Ascending aorta (tissue), 2 donors: ENCODE measurements at regions of chr6 and their contacts with region 1.

Region 1: DNA sequence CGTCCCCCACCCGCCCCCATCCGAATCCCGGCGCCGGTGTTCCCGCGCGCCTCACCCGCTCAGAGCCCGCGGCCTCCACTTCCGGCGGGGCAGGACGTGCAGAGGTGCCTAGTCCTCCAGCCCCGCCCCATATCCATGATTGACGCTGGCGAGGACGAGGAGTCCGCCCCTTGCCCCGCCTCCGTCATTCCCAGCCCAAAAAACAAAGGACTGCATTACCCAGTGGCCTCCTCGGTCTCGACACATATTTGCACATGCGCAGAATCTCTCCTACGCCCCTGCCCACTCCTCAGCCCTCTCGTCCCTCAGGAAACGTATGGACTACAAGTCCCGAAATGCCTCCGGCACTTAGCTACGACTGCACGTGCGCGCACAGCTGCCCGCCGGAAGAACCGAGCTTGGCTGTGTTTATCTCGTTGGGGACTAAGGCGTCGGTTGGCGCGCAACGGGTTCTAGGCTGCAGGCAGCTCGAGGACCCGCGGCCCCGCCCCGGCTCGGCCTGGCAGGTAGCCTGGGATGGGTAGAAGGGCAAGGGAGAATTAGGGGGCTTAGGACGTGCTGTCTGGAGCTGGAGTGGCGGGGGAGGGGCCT is at the starts of genes KLHDC3 and MEA1:
- DNase-seq: peak; percentile 99 to 100
- H3K4me3 ChIP-seq: peak within 1 kb of the TSS; percentile 76 to 81
- H3K27ac ChIP-seq: peak within 1 kb of the TSS; percentile 81 to 82
- H3K4me1 ChIP-seq: peaks cover 13 to 33% of the 10 kb centered on the region in 2 donors
- H3K27me3 ChIP-seq: no peaks in the 10 kb centered on the region
- CTCF ChIP-seq: no peak
- total RNA-seq, gene KLHDC3: 64.0 TPM
- total RNA-seq, gene MEA1: 61.1 TPM

Region 2: GRCh38 chr6:42901536-42901957 is 112.4 kb before region 1 on chr6:
- intact Hi-C with region 1: loop called (anchors 5 kb)
- DNase-seq: peak in 1 of 2 donors; percentile 87
- H3K4me3 ChIP-seq: no peak overlapping the region
- H3K27ac ChIP-seq: no peak overlapping the region
- H3K4me1 ChIP-seq: peaks cover 0 to 18% of the 10 kb centered on the region in 2 donors
- H3K27me3 ChIP-seq: no peaks in the 10 kb centered on the region
- CTCF ChIP-seq: peak; percentile 83 to 92 (median 88)

Region 3: DNA sequence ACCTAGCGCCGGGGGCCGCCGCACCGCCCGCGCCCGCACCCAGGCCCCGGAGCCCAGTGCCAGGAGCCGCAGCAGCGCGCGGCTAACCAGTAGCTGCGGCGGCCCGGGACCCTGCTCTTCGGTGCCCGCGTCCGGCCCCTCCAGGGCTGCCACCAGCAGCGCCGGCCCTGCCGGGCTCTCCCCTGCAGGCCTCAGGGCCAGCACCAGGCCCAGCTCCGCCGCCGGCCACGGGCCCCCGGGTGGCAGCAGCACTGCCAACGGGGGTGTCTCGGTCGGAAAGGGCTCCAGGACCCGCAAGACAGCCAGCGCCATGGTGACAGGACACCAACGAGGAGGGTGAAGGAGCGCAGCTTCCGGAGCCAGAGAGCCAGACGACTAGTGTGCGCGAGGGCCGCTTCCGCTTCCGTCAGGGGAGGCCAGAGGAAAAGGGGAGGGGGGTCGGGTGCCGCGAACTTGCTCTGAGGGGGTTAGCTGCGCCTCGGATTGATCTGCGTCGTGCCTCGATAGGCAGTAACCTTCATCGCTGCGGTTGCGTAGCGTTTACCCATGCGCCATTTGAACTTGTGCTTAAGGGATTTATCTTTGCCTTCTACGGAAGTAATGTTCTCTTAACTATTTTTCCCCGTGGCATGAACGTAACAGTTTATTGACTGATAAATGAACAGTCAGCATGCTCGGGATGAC is 35.0 kb before region 1 on chr6 and contains the start of gene PEX6:
- intact Hi-C with region 1: loop called (anchors 1 kb)
- DNase-seq: peak; percentile 37 to 94
- H3K4me3 ChIP-seq: peak within 1 kb of the TSS; percentile 84 to 92
- H3K27ac ChIP-seq: peak within 1 kb of the TSS; percentile 85 to 90
- H3K4me1 ChIP-seq: peaks cover 0 to 27% of the 10 kb centered on the region in 2 donors
- H3K27me3 ChIP-seq: no peaks in the 10 kb centered on the region
- CTCF ChIP-seq: no peak
- total RNA-seq, gene PEX6: 8.9 TPM

Region 4: GRCh38 chr6:43059168-43060033 is 45.5 kb after region 1 on chr6 and contains the starts of genes KLC4 and MRPL2:
- intact Hi-C with region 1: loop called (anchors 1 kb)
- DNase-seq: peak; percentile 97 to 99
- H3K4me3 ChIP-seq: peak within 1 kb of the TSS; percentile 84 to 94
- H3K27ac ChIP-seq: peak within 1 kb of the TSS; percentile 78 to 84
- H3K4me1 ChIP-seq: peaks cover 12 to 25% of the 10 kb centered on the region in 2 donors
- H3K27me3 ChIP-seq: no peaks in the 10 kb centered on the region
- CTCF ChIP-seq: no peak
- total RNA-seq, gene KLC4: 17.8 TPM
- total RNA-seq, gene MRPL2: 42.3 TPM

Region 5: GRCh38 chr6:43143235-43144124 is 129.5 kb after region 1 on chr6:
- intact Hi-C with region 1: loop called (anchors 5 kb)
- DNase-seq: peak; percentile 29 to 93
- H3K4me3 ChIP-seq: no peak overlapping the region
- H3K27ac ChIP-seq: peak overlapping the region in 1 of 2 donors; percentile 9
- H3K4me1 ChIP-seq: peaks cover 0 to 3% of the 10 kb centered on the region in 2 donors
- H3K27me3 ChIP-seq: no peaks in the 10 kb centered on the region
- CTCF ChIP-seq: peak; percentile 94 to 97 (median 95)